Cardiac septum (tissue), 1 donor: ENCODE measurements at regions of chr1 and their contacts with region 1.

Region 1: DNA sequence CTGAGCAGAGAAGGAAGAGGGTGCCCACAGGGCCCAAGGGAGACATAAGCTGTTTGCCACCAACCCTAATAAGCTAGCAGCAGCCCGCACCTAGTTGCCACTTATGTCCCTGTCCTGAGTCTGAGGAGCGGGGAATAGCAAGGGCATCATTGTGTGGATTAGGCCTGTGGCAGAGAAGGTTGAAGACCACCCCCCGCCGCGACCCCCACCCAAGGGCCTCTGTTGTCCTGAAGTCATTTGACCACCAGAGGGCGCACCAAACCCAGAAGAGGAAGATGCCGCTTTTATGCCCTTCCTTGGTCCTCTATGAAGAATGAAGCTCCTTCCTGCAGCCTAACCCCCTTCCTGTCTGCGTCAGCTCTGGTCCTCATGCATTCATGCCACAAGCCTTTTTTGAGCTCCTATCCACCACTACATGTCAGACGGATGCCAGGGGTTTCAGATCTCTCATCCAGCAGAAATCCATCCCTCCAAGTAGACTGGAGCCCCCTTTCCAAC is 16.6 kb downstream of the RHBG start:
- DNase-seq: no peak

Region 2: DNA sequence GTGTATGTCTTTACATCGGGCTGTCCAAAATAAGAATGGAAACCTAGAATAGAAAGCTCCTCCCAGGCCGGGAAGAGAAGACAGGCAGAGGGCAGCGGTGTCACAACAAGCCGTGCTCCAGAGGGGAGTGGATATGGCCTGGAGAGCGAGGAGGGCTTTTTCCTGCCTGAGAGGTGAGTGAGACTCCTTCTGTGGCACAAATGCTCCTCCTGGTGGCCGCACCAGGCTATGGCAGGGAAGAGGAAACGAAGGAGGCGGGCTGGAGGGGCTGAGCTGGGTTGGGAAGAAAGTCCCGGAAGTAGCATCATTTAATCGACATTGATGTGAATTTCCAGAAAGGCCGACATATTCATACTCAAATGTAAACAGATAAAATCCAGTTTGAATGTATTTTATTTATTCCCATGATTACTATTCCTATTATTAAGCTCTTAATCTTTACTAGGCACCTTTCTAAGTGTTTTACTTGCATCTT is 60.2 kb after region 1 on chr1:
- intact Hi-C with region 1: loop called (anchors 1 kb)
- DNase-seq: peak; percentile 87